MCF 10A (cell line): ENCODE measurements at regions of chr17 and their contacts with region 1.

Region 1: GRCh38 chr17:49101054-49101947 is 31.3 kb upstream of the B4GALNT2 start:
- DNase-seq: no peak
- H3K4me3 Mint-ChIP-seq: no peak overlapping the region
- H3K27ac Mint-ChIP-seq: peak overlapping the region; percentile 74
- H3K4me1 Mint-ChIP-seq: peaks cover 18% of the 10 kb centered on the region
- H3K27me3 Mint-ChIP-seq: no peaks in the 10 kb centered on the region
- CTCF ChIP-seq: no peak

Region 2: GRCh38 chr17:49053171-49053829 is 48.0 kb before region 1 on chr17:
- CTCF ChIA-PET with region 1: no interaction called
- POLR2A ChIA-PET with region 1: no interaction called
- intact Hi-C with region 1: no loop called
- DNase-seq: no peak
- H3K4me3 Mint-ChIP-seq: no peak overlapping the region
- H3K27ac Mint-ChIP-seq: no peak overlapping the region
- H3K4me1 Mint-ChIP-seq: no peaks in the 10 kb centered on the region
- H3K27me3 Mint-ChIP-seq: no peaks in the 10 kb centered on the region
- CTCF ChIP-seq: no peak

Region 3: DNA sequence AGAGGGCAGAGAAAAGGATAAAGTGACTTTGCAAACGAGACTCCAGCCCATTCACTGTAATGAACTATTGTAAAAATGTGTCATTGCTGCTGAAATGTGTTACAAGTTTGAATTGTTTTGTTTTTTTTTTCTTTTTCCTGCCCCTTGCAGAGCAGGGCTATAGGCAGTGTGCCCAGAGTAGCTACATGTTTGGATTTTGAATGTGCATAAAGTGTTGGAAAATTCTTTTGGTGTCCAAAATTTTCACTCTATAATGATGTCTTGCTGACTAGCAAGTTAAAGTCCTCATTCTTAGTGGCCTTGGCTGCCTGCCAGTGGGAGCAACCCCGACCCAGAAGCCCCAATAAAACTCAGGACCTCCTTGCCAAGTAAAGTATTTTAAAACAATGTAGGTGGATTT is 37.6 kb before region 1 on chr17:
- CTCF ChIA-PET with region 1: no interaction called
- POLR2A ChIA-PET with region 1: no interaction called
- intact Hi-C with region 1: no loop called
- DNase-seq: no peak
- H3K4me3 Mint-ChIP-seq: no peak overlapping the region
- H3K27ac Mint-ChIP-seq: no peak overlapping the region
- H3K4me1 Mint-ChIP-seq: no peaks in the 10 kb centered on the region
- H3K27me3 Mint-ChIP-seq: no peaks in the 10 kb centered on the region
- CTCF ChIP-seq: no peak

Region 4: DNA sequence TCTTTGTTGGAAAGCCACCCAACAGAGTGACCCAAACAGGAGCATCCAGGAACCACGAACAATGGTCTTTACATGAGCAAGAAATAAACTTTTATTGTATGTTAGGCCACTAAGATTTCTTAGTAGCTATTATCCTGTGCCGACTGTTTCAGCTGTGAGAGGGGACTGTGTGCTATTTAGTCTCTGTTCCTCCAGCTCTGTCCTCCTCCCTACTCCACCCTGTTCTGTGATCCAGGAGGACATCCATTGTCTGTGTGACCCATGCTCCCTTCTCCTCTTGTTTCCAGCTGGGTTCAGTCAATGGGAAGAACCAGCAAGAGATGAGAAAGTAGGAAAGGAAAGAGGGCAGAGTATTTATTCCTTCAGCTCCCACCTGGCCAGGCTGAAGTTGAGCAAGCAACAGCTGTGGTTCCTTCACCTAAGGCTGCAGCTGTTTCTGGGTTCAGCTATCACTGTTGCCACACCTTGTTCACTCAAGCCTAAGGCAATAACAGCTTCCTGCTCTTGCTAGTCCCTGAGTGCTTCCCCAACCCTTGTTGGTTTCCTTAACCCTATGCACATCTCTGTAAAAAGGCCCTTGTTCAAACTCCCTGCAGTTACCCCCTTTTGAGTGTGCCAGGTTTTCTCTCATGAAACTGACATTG is 16.4 kb after region 1 on chr17:
- CTCF ChIA-PET with region 1: no interaction called
- POLR2A ChIA-PET with region 1: interaction called, 13 read pairs
- intact Hi-C with region 1: no loop called
- DNase-seq: peak; percentile 66
- H3K4me3 Mint-ChIP-seq: no peak overlapping the region
- H3K27ac Mint-ChIP-seq: no peak overlapping the region
- H3K4me1 Mint-ChIP-seq: peaks cover 16% of the 10 kb centered on the region
- H3K27me3 Mint-ChIP-seq: no peaks in the 10 kb centered on the region
- CTCF ChIP-seq: no peak

Region 5: GRCh38 chr17:49239963-49240362 is 138.7 kb after region 1 on chr17:
- CTCF ChIA-PET with region 1: no interaction called
- POLR2A ChIA-PET with region 1: no interaction called
- intact Hi-C with region 1: no loop called
- DNase-seq: no peak
- H3K4me3 Mint-ChIP-seq: no peak overlapping the region
- H3K27ac Mint-ChIP-seq: no peak overlapping the region
- H3K4me1 Mint-ChIP-seq: no peaks in the 10 kb centered on the region
- H3K27me3 Mint-ChIP-seq: no peaks in the 10 kb centered on the region
- CTCF ChIP-seq: no peak